PC-9 (cell line): ENCODE measurements at regions of chr14 and their contacts with region 1.

Region 1: GRCh38 chr14:50321009-50321660 is 9.0 kb downstream of the DMAC2L start:
- DNase-seq: peak; percentile 66 to 99
- H3K4me3 ChIP-seq: no peak overlapping the region
- H3K27ac ChIP-seq: peak overlapping the region; percentile 82
- H3K4me1 ChIP-seq: peaks cover 31% of the 10 kb centered on the region
- H3K27me3 ChIP-seq: no peaks in the 10 kb centered on the region
- CTCF ChIP-seq: peak; percentile 82

Region 2: GRCh38 chr14:50396631-50397390 is 75.7 kb after region 1 on chr14 and contains the start of gene CDKL1:
- CTCF ChIA-PET with region 1: no interaction called
- POLR2A ChIA-PET with region 1: no interaction called
- intact Hi-C with region 1: no loop called
- DNase-seq: peak; percentile 48 to 73
- H3K4me3 ChIP-seq: peak within 1 kb of the TSS; percentile 75
- H3K27ac ChIP-seq: peak within 1 kb of the TSS; percentile 32
- H3K4me1 ChIP-seq: no peaks in the 10 kb centered on the region
- H3K27me3 ChIP-seq: no peaks in the 10 kb centered on the region
- CTCF ChIP-seq: no peak
- total RNA-seq, gene CDKL1: 2.4 and 4.6 TPM in 2 replicates

Region 3: GRCh38 chr14:50425816-50426215 is 104.7 kb after region 1 on chr14:
- CTCF ChIA-PET with region 1: no interaction called
- POLR2A ChIA-PET with region 1: no interaction called
- intact Hi-C with region 1: loop called (anchors 10 kb)
- DNase-seq: no peak
- H3K4me3 ChIP-seq: no peak overlapping the region
- H3K27ac ChIP-seq: no peak overlapping the region
- H3K4me1 ChIP-seq: no peaks in the 10 kb centered on the region
- H3K27me3 ChIP-seq: no peaks in the 10 kb centered on the region
- CTCF ChIP-seq: no peak

Region 4: DNA sequence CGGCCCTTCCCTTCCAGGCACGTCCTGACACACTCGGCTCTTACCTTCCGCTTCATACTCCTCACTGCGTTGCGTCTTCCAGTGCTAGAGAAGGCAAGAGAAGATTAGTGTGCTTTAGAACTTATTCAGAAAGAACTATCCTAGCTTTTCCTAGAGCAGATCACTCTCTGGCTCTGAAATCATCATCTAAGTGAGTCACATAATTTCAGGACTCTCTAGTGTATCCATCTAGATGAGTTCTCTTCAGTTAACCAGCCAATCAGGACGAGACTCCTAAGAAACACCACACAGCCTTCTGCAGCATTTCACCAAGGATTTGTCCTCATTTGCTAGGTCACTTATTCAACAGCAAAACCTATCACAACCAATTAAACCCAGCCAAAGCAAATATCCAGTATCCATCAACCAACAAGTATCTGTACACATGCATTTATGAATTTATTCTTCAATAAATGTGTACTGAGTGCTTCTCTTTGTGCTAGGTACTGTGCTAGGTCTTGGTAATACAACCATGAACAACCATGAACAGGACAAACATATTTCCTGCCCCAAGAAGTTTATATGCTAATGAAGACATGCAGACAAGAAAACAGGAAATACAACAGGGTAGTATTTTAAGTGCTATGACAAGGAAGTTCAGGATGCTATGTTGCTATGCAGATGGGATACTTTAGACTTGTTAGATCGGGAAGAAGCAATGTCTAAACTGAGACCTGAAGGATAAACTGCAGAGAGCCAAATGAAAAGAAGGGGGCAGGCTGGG is 457.8 kb after region 1 on chr14:
- CTCF ChIA-PET with region 1: interaction called, 6 read pairs
- POLR2A ChIA-PET with region 1: no interaction called
- intact Hi-C with region 1: loop called (anchors 2 kb)
- DNase-seq: no peak
- H3K4me3 ChIP-seq: no peak overlapping the region
- H3K27ac ChIP-seq: no peak overlapping the region
- H3K4me1 ChIP-seq: peaks cover 19% of the 10 kb centered on the region
- H3K27me3 ChIP-seq: no peaks in the 10 kb centered on the region
- CTCF ChIP-seq: no peak

Region 5: DNA sequence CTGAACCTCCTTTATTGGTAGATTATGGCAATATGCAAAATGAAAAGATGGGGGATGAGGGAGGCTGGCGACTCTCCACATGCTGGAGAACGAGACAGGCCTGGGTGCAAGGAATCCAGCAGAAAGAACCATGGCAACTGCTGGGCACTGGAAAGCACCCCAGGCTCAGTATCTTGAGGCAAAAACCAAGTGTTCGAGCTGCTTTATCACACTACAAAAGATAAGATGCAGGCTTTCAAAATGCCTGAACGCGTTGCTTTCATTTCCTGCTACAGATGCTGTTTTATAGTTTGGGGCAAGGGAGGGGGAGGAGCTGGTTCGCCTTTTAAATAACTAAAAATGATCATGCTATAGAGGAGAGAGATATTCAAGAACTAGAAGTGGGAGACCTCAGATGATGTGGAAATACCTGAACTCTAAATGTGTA is 470.9 kb after region 1 on chr14:
- CTCF ChIA-PET with region 1: no interaction called
- POLR2A ChIA-PET with region 1: no interaction called
- intact Hi-C with region 1: no loop called
- DNase-seq: no peak
- H3K4me3 ChIP-seq: no peak overlapping the region
- H3K27ac ChIP-seq: no peak overlapping the region
- H3K4me1 ChIP-seq: no peaks in the 10 kb centered on the region
- H3K27me3 ChIP-seq: no peaks in the 10 kb centered on the region
- CTCF ChIP-seq: no peak

Region 6: DNA sequence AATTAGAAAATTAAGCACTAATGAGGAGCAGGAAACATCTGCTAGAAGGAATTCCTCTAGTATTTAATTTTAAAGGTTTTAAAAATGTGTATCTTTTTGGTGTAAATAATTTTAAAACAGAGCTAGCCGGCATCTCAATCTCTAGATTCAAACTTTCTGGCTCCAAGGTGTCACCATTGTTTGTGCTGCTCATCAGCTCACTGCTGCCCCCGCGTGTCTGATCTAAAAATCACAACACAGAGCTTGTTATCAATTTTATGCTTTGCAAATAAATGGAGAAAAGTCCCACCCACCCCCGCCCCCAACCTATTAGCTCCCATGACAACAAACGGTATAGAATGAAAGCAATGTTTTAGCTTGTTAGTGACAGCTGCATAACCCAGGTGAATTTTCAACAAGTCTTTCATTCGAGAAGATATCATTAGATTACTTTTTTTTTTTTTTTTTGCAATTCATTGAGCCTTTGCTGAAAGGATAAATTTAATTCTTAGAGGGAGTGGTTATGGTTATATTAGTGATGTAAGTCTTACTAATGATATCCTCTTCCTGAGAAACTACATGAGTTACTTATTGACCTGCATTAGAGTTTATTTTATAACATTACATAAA is 539.4 kb after region 1 on chr14:
- CTCF ChIA-PET with region 1: interaction called, 3 read pairs
- POLR2A ChIA-PET with region 1: no interaction called
- intact Hi-C with region 1: loop called (anchors 1 kb)
- DNase-seq: peak; percentile 64 to 80
- H3K4me3 ChIP-seq: peak overlapping the region; percentile 56; the same call in 1 of the 2 replicates
- H3K27ac ChIP-seq: no peak overlapping the region
- H3K4me1 ChIP-seq: no peaks in the 10 kb centered on the region
- H3K27me3 ChIP-seq: no peaks in the 10 kb centered on the region
- CTCF ChIP-seq: peak; percentile 78